Activated T-helper 1 cell treated with anti-CD3 and anti-CD28 coated beads, Interleukin-12 subunit alpha, Interleukin-12 subunit beta, Interleukin-2, Interleukin-4 antibody, amounts not matched to agents 30 ng/mL and 10 ng/mL and 1 ng/mL, durations not matched to agents 14 hours and 24 hours and 36 hours (primary cell): ENCODE measurements at regions of chr5 and their contacts with region 1.

Region 1: DNA sequence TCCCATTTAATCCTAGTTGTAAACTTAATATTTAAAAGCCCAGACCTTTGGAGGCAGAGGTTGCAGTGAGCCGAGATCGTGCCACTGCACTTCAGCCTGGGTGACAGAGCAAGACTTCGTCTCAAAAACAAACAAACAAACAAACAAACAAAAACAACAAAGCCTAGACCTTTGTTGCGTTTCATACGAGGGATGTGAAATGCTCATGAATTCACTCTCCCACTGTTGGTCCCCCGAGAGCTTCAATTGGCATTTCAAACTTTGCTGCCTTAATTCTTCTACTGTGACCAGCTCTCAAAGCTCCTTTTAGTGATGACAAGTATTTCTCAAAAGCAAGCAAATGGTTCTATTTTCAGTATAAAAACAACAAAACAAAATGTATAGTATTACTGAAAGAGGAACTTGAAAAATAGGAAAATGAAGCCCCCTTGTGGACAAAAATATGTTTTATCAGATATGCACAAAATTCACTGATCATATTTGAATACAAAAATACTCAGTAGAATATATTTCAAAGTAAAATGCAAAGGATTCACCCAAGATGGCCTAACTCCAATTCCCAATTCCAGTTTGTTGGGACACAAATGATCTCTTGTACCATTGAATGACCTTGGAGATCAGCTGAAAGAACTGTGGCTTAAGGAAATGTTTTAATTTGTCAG is 140.4 kb downstream of the ESM1 start:
- DNase-seq: no peak
- H3K4me3 Mint-ChIP-seq: no peak overlapping the region
- H3K27ac Mint-ChIP-seq: peak overlapping the region; percentile 59
- H3K4me1 Mint-ChIP-seq: peaks cover 32% of the 10 kb centered on the region
- H3K27me3 Mint-ChIP-seq: peaks cover 14% of the 10 kb centered on the region

Region 2: DNA sequence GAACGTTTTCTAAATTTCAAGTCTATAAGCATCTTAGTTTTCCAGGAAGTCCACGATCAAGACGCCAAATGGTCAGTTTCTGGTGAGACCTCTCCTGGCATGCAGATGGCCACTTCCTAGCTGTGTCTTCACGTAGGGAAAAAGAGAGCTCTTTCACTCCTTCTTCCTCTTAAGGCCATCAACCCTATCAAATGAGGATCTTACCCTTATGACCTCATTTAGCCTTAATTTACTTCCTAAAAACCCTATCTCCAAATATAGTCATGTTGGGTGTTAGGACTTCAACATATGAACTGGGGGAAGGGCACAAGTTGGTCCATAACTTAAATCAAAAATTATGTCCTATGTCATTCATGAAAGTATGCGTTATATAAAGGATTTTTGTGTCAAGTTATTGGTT is 764.2 kb before region 1 on chr5:
- intact Hi-C with region 1: no loop called
- DNase-seq: no peak
- H3K4me3 Mint-ChIP-seq: no peak overlapping the region
- H3K27ac Mint-ChIP-seq: no peak overlapping the region
- H3K4me1 Mint-ChIP-seq: no peaks in the 10 kb centered on the region
- H3K27me3 Mint-ChIP-seq: no peaks in the 10 kb centered on the region

Region 3: GRCh38 chr5:54547711-54548250 is 297.3 kb before region 1 on chr5:
- intact Hi-C with region 1: no loop called
- DNase-seq: no peak
- H3K4me3 Mint-ChIP-seq: no peak overlapping the region
- H3K27ac Mint-ChIP-seq: no peak overlapping the region
- H3K4me1 Mint-ChIP-seq: no peaks in the 10 kb centered on the region
- H3K27me3 Mint-ChIP-seq: no peaks in the 10 kb centered on the region

Region 4: GRCh38 chr5:54610197-54610944 is 234.7 kb before region 1 on chr5:
- intact Hi-C with region 1: loop called (anchors 2 kb)
- DNase-seq: peak; percentile 41
- H3K4me3 Mint-ChIP-seq: peak overlapping the region; percentile 68
- H3K27ac Mint-ChIP-seq: peak overlapping the region; percentile 92
- H3K4me1 Mint-ChIP-seq: peaks cover 27% of the 10 kb centered on the region
- H3K27me3 Mint-ChIP-seq: peaks cover 3% of the 10 kb centered on the region

Region 5: GRCh38 chr5:54673523-54674225 is 171.4 kb before region 1 on chr5:
- intact Hi-C with region 1: loop called (anchors 10 kb)
- DNase-seq: peak; percentile 41
- H3K4me3 Mint-ChIP-seq: peak overlapping the region; percentile 54
- H3K27ac Mint-ChIP-seq: peak overlapping the region; percentile 77
- H3K4me1 Mint-ChIP-seq: peaks cover 78% of the 10 kb centered on the region
- H3K27me3 Mint-ChIP-seq: no peaks in the 10 kb centered on the region

Region 6: GRCh38 chr5:54743997-54744788 is 100.8 kb before region 1 on chr5:
- intact Hi-C with region 1: loop called (anchors 5 kb)
- DNase-seq: peak; percentile 63
- H3K4me3 Mint-ChIP-seq: peak overlapping the region; percentile 50
- H3K27ac Mint-ChIP-seq: peak overlapping the region; percentile 87
- H3K4me1 Mint-ChIP-seq: peaks cover 20% of the 10 kb centered on the region
- H3K27me3 Mint-ChIP-seq: no peaks in the 10 kb centered on the region

Region 7: GRCh38 chr5:54792611-54793404 is 52.2 kb before region 1 on chr5:
- intact Hi-C with region 1: loop called (anchors 1 kb)
- DNase-seq: no peak
- H3K4me3 Mint-ChIP-seq: peak overlapping the region; percentile 32
- H3K27ac Mint-ChIP-seq: peak overlapping the region; percentile 91
- H3K4me1 Mint-ChIP-seq: peaks cover 47% of the 10 kb centered on the region
- H3K27me3 Mint-ChIP-seq: peaks cover 3% of the 10 kb centered on the region

Region 8: GRCh38 chr5:55072666-55073065 is 227.6 kb after region 1 on chr5:
- intact Hi-C with region 1: no loop called
- DNase-seq: peak; percentile 31
- H3K4me3 Mint-ChIP-seq: peak overlapping the region; percentile 57
- H3K27ac Mint-ChIP-seq: peak overlapping the region; percentile 88
- H3K4me1 Mint-ChIP-seq: peaks cover 53% of the 10 kb centered on the region
- H3K27me3 Mint-ChIP-seq: no peaks in the 10 kb centered on the region